ENCODE measurements at regions of chr1 and their contacts with region 1.

Region 1: GRCh38 chr1:87084244-87084836 is 169.9 kb downstream of the HS2ST1 start:
- DNase-seq: no peak
- ATAC-seq: peak in 1 of 4 donors; percentile 61
- H3K4me3 ChIP-seq: no peak overlapping the region
- H3K27ac ChIP-seq: no peak overlapping the region
- H3K4me1 ChIP-seq: no peaks in the 10 kb centered on the region
- H3K27me3 ChIP-seq: no peaks in the 10 kb centered on the region
- CTCF ChIP-seq: peak; percentile 72

Region 2: DNA sequence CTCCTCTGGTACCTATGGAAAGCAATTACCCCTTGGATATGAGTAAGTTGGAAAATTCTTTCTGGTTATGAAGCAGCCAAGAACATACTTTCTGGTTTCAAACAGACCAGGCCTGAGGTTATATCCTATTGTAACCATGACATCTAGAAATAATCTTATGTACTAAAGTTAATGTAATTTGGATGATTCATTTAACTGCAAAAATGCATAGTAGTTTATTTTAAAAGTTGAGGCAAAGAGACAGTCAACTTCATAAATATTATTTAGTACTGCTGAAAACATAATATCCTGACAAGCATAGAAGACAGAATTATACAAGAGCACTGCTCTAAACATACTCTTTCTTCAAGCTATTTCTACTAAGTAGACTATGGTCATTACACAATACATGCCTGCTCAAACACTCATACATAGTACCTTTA is 713.7 kb before region 1 on chr1:
- intact Hi-C with region 1: loop called in 1 of 2 experiments (anchors 10 kb)
- DNase-seq: no peak
- ATAC-seq: no peak
- H3K4me3 ChIP-seq: no peak overlapping the region
- H3K27ac ChIP-seq: no peak overlapping the region
- H3K4me1 ChIP-seq: no peaks in the 10 kb centered on the region
- H3K27me3 ChIP-seq: no peaks in the 10 kb centered on the region
- CTCF ChIP-seq: no peak

Region 3: DNA sequence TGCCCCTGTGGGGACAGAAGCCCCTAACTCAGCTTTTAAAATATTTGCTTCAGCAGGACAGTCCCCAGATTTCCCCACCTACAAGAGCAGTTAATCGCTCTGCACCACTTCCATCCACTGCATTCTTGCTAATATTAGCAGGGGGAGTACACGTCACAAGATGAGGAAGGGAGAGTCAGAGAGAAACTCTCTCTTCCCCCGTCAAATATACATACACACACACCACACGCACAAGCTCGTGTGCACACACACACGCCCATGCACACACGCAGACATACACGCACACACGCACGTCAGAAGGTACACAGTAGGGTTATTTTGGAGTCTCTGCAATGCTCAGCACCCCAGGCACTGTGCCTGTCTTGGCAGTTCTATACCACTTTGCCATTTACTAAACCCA is 613.5 kb before region 1 on chr1:
- intact Hi-C with region 1: loop called (anchors 10 kb)
- DNase-seq: no peak
- ATAC-seq: no peak
- H3K4me3 ChIP-seq: no peak overlapping the region
- H3K27ac ChIP-seq: no peak overlapping the region
- H3K4me1 ChIP-seq: no peaks in the 10 kb centered on the region
- H3K27me3 ChIP-seq: no peaks in the 10 kb centered on the region
- CTCF ChIP-seq: no peak

Region 4: DNA sequence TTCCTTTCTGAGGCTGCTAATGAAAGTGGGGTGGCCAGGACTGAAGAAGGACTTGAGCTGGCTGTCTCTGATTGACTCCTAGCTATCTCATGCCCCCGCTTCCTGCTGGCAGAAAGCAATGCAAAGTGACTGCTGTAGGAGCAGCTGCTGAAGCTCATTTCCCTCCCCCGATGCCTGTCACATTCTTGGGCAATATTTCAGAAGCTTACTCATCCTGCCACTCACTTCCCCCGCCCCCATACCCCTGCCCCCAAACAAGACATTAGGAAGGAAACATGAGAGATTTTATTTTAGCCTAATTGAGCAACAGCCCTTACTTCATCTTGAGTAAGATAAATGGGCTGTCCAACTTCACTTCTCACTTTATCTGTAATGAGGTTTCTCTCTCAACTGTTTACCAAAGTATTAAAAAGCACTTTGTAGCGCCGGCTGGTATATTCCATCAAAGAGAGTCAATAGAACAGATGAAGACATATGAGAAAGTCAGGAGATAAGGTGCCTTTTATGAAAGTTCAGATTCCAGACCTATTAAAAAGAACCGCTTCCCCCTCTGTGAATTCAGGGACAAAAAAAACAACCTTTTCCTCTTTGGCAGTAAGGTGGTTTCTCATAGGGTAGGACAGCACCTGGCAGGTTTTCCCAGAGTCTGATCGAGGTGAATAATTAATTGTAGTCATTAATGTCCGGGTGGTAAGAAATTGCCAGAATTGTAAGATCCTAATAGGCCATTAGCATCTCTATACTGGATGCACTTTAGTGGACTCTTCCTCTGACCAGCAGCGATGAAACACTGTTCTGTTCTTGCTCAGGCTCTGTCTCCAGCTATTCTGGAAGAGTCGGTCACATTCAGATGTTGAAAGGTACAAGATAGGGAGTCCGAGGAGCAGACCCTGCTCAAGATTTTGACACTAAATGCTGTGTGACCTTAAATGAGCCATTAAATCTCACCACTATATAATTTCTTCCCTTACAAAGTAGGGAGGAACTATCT is 309.7 kb before region 1 on chr1:
- intact Hi-C with region 1: loop called in 1 of 2 experiments (anchors 10 kb)
- DNase-seq: peak; percentile 71 to 88
- ATAC-seq: peak; percentile 95 to 96 (median 96)
- H3K4me3 ChIP-seq: peak overlapping the region; percentile 41
- H3K27ac ChIP-seq: peak overlapping the region; percentile 96
- H3K4me1 ChIP-seq: peaks cover 39% of the 10 kb centered on the region
- H3K27me3 ChIP-seq: no peaks in the 10 kb centered on the region
- CTCF ChIP-seq: no peak

Region 5: DNA sequence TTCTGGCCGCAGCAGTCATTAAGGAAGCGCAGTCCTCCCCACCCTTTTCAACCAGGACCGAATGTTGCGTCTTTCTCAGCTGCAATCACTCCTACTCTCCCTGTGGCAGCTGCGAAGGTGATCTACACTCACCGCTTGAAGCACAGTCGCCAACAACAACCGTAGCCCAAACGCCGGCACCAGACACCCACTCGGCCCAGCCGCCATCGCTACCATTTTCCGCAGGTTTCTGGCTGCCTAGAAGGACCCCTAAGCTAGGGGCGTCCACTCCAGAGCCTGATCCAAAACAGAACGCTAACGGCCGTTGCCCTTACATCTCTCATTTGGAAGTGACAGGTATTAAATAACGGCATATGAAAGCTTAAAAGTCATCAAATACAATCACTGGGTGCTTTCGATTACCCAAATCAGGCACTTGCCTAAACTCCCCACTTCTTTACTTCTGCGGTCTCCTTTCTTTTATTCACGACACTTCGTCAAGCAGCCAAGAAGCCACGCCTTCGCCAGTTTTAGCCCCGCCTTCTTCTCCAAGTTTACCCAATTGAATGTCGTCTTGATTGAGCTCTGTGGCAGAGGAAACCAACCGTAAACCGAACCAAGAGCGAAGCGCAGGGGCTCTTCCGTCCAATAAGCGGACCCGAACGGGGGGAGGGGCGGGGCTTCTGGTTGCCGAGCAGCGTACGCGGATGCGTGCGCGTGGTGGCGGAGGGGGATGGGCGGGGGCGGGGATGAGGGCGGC is 170.3 kb before region 1 on chr1 and contains the start of gene SELENOF:
- intact Hi-C with region 1: loop called in 1 of 2 experiments (anchors 10 kb)
- DNase-seq: peak; percentile 99
- ATAC-seq: peak; percentile 92 to 99 (median 98)
- H3K4me3 ChIP-seq: peak within 1 kb of the TSS; percentile 93
- H3K27ac ChIP-seq: peak within 1 kb of the TSS; percentile 98
- H3K4me1 ChIP-seq: peaks cover 19% of the 10 kb centered on the region
- H3K27me3 ChIP-seq: no peaks in the 10 kb centered on the region
- CTCF ChIP-seq: peak; percentile 3
- total RNA-seq, gene SELENOF: 56.4 to 67.6 (median 61.0) TPM